PC-9 (cell line): ENCODE measurements at regions of chr3 and their contacts with region 1.

Region 1: GRCh38 chr3:142787719-142788118 is 63.9 kb downstream of the TRPC1 start:
- DNase-seq: no peak
- H3K4me3 ChIP-seq: no peak overlapping the region
- H3K27ac ChIP-seq: no peak overlapping the region
- H3K4me1 ChIP-seq: no peaks in the 10 kb centered on the region
- H3K27me3 ChIP-seq: no peaks in the 10 kb centered on the region
- CTCF ChIP-seq: no peak

Region 2: DNA sequence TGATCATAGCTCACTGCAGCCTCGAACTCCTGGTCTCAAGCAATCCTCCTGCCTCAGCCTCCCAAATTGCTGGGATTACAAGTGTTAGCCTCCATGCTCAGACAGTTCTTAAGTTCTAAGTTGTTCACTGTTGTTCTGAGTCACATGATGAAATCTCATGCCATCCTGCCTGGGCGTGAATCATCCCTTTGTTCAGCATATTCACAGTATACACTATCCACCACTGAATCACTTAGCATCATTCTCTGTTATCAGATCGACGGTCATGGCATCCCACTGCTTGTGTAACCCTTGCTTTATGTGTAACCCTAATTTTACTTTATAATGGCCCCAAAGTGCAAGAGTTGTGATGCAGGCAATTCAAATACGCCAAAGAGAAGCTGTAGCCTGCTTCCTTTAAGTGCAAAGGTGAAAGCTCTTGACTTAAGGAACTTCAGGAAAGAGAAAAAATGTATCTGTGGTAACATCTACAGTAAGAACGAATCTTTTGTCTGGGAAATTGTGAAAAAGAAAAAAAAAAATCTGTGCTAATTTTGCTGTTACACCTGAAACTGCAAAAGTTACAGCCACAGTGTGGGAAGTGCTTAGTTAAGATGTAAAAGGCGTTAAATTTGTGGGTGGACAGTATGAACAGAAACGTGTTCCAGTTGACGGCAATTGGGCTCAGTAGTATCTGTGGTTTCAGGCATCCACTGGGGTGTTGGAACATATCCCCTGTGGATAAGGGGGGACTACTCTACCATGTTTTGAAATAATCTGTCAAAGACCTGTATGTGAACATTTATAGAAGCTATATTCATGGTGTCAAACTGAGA is 20.6 kb after region 1 on chr3:
- CTCF ChIA-PET with region 1: no interaction called
- POLR2A ChIA-PET with region 1: interaction called, 10 read pairs
- intact Hi-C with region 1: no loop called
- DNase-seq: peak; percentile 20 to 66
- H3K4me3 ChIP-seq: no peak overlapping the region
- H3K27ac ChIP-seq: peak overlapping the region; percentile 66
- H3K4me1 ChIP-seq: peaks cover 9% of the 10 kb centered on the region
- H3K27me3 ChIP-seq: no peaks in the 10 kb centered on the region
- CTCF ChIP-seq: no peak

Region 3: GRCh38 chr3:142965581-142965980 is 177.9 kb after region 1 on chr3:
- CTCF ChIA-PET with region 1: interaction called, 10 read pairs
- POLR2A ChIA-PET with region 1: no interaction called
- intact Hi-C with region 1: no loop called
- DNase-seq: no peak
- H3K4me3 ChIP-seq: no peak overlapping the region
- H3K27ac ChIP-seq: no peak overlapping the region
- H3K4me1 ChIP-seq: peaks cover 6% of the 10 kb centered on the region; the same call in 1 of the 2 replicates
- H3K27me3 ChIP-seq: no peaks in the 10 kb centered on the region
- CTCF ChIP-seq: no peak

Region 4: GRCh38 chr3:143040261-143040879 is 252.7 kb after region 1 on chr3:
- CTCF ChIA-PET with region 1: no interaction called
- POLR2A ChIA-PET with region 1: no interaction called
- intact Hi-C with region 1: no loop called
- DNase-seq: peak in 1 of 2 experiments; percentile 44
- H3K4me3 ChIP-seq: no peak overlapping the region
- H3K27ac ChIP-seq: no peak overlapping the region
- H3K4me1 ChIP-seq: peaks cover 8% of the 10 kb centered on the region; the same call in 1 of the 2 replicates
- H3K27me3 ChIP-seq: no peaks in the 10 kb centered on the region
- CTCF ChIP-seq: peak; percentile 60

Region 5: GRCh38 chr3:143226678-143227291 is 439.1 kb after region 1 on chr3:
- CTCF ChIA-PET with region 1: no interaction called
- POLR2A ChIA-PET with region 1: no interaction called
- intact Hi-C with region 1: no loop called
- DNase-seq: no peak
- H3K4me3 ChIP-seq: no peak overlapping the region
- H3K27ac ChIP-seq: no peak overlapping the region
- H3K4me1 ChIP-seq: no peaks in the 10 kb centered on the region
- H3K27me3 ChIP-seq: no peaks in the 10 kb centered on the region
- CTCF ChIP-seq: no peak